ENCODE measurements at regions of chr18 and their contacts with region 1.

Region 1: GRCh38 chr18:55234366-55235093 is 275.3 kb upstream of the CCDC68 start:
- DNase-seq: peak; percentile 53 to 71
- ATAC-seq: peak; percentile 86 to 96
- H3K4me3 ChIP-seq: no peak overlapping the region
- H3K27ac ChIP-seq: peak overlapping the region; percentile 26 to 60 (median 51)
- H3K4me1 ChIP-seq: peaks cover 4 to 13% of the 10 kb centered on the region in 2 donors
- H3K27me3 ChIP-seq: no peaks in the 10 kb centered on the region
- CTCF ChIP-seq: peak; percentile 60 to 85 (median 82)
- POLR2A ChIP-seq: no peak

Region 2: DNA sequence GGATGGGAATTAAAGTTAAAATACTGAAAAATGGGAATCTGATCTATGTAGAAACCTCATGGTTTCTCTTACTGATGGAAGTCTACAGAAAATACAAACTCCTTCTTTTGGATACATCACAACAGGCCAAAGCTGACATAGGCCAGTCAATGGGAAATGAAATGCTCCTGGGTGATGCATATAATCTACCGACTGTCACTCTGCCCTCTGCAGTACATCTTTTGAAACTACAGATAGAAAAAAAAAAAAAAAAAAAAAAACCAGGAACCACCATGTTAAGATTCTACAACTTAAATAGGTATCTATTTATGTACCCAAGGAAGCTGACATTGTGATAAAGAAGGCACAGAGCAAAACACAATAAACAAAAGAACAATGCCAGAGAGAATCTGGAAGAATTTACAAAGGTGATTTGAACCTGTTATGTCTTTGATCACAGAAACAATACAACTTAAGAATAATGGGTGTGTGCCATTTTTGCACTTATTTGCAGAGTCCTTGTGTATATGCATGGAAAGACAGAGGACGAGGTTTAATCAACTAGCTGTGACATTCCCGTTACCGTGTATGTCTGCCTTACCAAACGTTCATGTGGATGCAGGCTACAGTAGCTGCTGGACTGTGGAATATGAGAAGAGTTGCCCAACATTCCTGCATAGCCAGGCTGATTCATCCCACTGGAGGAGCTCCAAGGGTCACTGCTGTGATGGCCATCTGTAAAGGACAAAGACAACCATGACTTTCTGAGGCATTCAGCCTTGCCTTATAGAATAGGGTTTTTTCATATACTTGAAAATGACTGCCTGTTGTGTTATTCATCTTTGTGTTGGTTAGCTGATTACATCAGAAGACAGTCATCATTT is 40.7 kb after region 1 on chr18:
- in situ Hi-C with region 1: no loop called
- intact Hi-C with region 1: loop called (anchors 2 kb)
- DNase-seq: peak; percentile 84 to 94
- ATAC-seq: peak; percentile 100
- H3K4me3 ChIP-seq: peak overlapping the region in 1 of 4 donors; percentile 40
- H3K27ac ChIP-seq: peak overlapping the region; percentile 56 to 81 (median 68)
- H3K4me1 ChIP-seq: peaks cover 20 to 22% of the 10 kb centered on the region in 2 donors
- H3K27me3 ChIP-seq: no peaks in the 10 kb centered on the region
- CTCF ChIP-seq: peak in 2 of 5 experiments; percentile 31 to 34
- POLR2A ChIP-seq: no peak

Region 3: DNA sequence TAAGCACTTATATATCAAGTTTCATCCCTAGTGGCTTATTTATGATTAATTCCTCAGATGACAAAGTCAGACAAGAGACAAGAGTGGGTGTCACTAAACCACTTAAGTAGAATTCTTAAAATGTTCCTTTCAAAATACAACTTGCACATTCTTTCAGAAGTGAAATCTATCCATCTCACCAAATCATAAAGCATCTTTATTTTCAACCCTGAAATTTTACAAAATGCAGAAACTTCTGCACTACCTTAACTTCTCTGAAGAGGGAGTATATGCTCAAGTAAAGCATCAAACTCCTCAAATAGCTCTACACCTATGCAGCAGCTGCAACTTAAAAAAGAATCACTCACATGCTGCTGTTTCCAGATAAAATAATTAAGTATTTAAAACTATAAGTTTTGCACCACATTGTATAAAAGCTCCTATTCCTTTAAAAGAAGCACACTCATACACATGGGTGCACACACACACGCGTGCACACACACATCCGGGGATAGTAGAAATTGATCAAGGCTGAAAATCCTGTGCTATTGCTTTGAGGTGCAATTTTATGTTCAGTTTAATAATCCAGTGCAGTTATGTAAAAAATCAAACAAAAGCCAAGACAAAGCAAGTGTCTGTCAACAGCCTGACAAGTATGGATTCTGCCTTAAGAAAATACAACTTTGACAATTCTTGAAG is 109.0 kb after region 1 on chr18:
- in situ Hi-C with region 1: loop called in 1 of 4 experiments (anchors 25 kb)
- intact Hi-C with region 1: no loop called
- DNase-seq: no peak
- ATAC-seq: peak; percentile 55 to 68
- H3K4me3 ChIP-seq: no peak overlapping the region
- H3K27ac ChIP-seq: peak overlapping the region in 3 of 4 donors; percentile 15 to 28 (median 26)
- H3K4me1 ChIP-seq: peaks cover 16 to 28% of the 10 kb centered on the region in 2 donors
- H3K27me3 ChIP-seq: no peaks in the 10 kb centered on the region
- CTCF ChIP-seq: peak in 4 of 5 experiments; percentile 54 to 65 (median 60)
- POLR2A ChIP-seq: no peak

Region 4: GRCh38 chr18:55405893-55406406 is 171.4 kb after region 1 on chr18:
- in situ Hi-C with region 1: loop called in 3 of 4 experiments (anchors 5 to 25 kb)
- intact Hi-C with region 1: no loop called
- DNase-seq: peak; percentile 81 to 92
- ATAC-seq: peak; percentile 88 to 93
- H3K4me3 ChIP-seq: peak overlapping the region; percentile 50 to 58 (median 54)
- H3K27ac ChIP-seq: peak overlapping the region; percentile 80 to 85 (median 81)
- H3K4me1 ChIP-seq: peaks cover 47 to 84% of the 10 kb centered on the region in 2 donors
- H3K27me3 ChIP-seq: no peaks in the 10 kb centered on the region
- CTCF ChIP-seq: peak in 2 of 5 experiments; percentile 23 to 30
- POLR2A ChIP-seq: no peak

Region 5: GRCh38 chr18:55589625-55590291 is 355.2 kb after region 1 on chr18:
- in situ Hi-C with region 1: loop called (anchors 10 to 25 kb)
- intact Hi-C with region 1: loop called (anchors 5 kb)
- DNase-seq: peak; percentile 95 to 96
- ATAC-seq: peak; percentile 81 to 86
- H3K4me3 ChIP-seq: peak overlapping the region; percentile 67 to 86 (median 78)
- H3K27ac ChIP-seq: peak overlapping the region; percentile 88 to 93 (median 91)
- H3K4me1 ChIP-seq: peaks cover 4 to 6% of the 10 kb centered on the region in 2 donors
- H3K27me3 ChIP-seq: no peaks in the 10 kb centered on the region
- CTCF ChIP-seq: no peak
- POLR2A ChIP-seq: peak; percentile 56 to 74

Region 6: GRCh38 chr18:55839343-55839742 is 604.8 kb after region 1 on chr18:
- in situ Hi-C with region 1: no loop called
- intact Hi-C with region 1: no loop called
- DNase-seq: no peak
- ATAC-seq: no peak
- H3K4me3 ChIP-seq: no peak overlapping the region
- H3K27ac ChIP-seq: no peak overlapping the region
- H3K4me1 ChIP-seq: no peaks in the 10 kb centered on the region
- H3K27me3 ChIP-seq: no peaks in the 10 kb centered on the region
- CTCF ChIP-seq: no peak
- POLR2A ChIP-seq: no peak

Region 7: GRCh38 chr18:55861266-55861665 is 626.7 kb after region 1 on chr18:
- in situ Hi-C with region 1: no loop called
- intact Hi-C with region 1: loop called (anchors 10 kb)
- DNase-seq: no peak
- ATAC-seq: peak in 1 of 2 donors; percentile 33
- H3K4me3 ChIP-seq: no peak overlapping the region
- H3K27ac ChIP-seq: no peak overlapping the region
- H3K4me1 ChIP-seq: peaks cover 3 to 10% of the 10 kb centered on the region in 2 donors
- H3K27me3 ChIP-seq: peaks cover 40 to 53% (median 51%) of the 10 kb centered on the region in 3 donors
- CTCF ChIP-seq: peak in 3 of 5 experiments; percentile 20 to 32 (median 22)
- POLR2A ChIP-seq: no peak